ENCODE measurements at regions of chr22 and their contacts with region 1.

Region 1: DNA sequence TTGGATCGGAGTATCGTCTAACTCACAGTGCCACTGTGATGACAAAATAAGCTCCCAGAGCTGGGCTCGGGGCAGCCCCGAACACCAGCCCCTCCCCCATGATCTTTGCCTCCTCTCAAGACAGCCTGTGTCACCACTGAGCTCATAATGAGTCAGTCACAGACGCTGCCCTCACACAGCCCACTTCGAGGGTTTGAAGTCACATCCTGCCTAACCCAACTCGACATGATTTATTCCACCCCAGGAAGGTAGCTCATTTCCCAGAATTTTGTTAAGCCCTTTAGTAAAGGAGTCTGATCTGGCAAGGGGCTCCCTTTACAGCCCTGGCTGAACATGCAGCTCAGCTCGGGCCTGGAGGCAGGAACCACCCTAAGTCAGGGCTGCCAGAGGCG is 22.8 kb downstream of the MYH9 start:
- DNase-seq: peak; percentile 74
- ATAC-seq: peak; percentile 86
- H3K4me3 Mint-ChIP-seq: peak overlapping the region; percentile 74
- H3K27ac Mint-ChIP-seq: peak overlapping the region; percentile 88
- H3K4me1 Mint-ChIP-seq: peaks cover 83% of the 10 kb centered on the region
- H3K27me3 Mint-ChIP-seq: no peaks in the 10 kb centered on the region

Region 2: GRCh38 chr22:36352803-36353507 is 12.1 kb before region 1 on chr22:
- POLR2A ChIA-PET with region 1: interaction called, 11 read pairs
- DNase-seq: peak; percentile 66
- ATAC-seq: peak; percentile 64
- H3K4me3 Mint-ChIP-seq: peak overlapping the region; percentile 64
- H3K27ac Mint-ChIP-seq: peak overlapping the region; percentile 89
- H3K4me1 Mint-ChIP-seq: peaks cover 80% of the 10 kb centered on the region
- H3K27me3 Mint-ChIP-seq: no peaks in the 10 kb centered on the region

Region 3: GRCh38 chr22:36379593-36380361 is 14.8 kb after region 1 on chr22:
- POLR2A ChIA-PET with region 1: interaction called, 132 read pairs
- DNase-seq: peak; percentile 59
- ATAC-seq: peak; percentile 62
- H3K4me3 Mint-ChIP-seq: peak overlapping the region; percentile 78
- H3K27ac Mint-ChIP-seq: peak overlapping the region; percentile 97
- H3K4me1 Mint-ChIP-seq: peaks cover 83% of the 10 kb centered on the region
- H3K27me3 Mint-ChIP-seq: no peaks in the 10 kb centered on the region

Region 4: DNA sequence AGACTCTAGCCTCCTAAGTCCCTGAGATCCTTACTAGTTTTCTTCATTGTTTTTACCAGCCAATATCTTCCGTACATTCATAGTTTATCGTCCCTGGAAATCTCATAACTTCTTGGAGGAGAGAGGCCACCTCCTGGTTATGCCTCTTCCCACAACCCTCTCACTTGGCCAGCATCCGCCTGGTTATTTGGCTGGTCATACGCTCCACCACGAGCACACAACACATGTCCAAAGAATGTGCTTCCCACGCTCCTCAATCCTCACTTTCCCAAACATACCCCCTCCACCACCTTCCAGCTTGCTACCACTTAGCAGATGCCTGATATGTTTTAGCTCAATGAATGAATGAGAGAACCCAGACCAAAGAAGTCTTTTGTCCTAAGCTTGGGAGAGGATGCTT is 247.4 kb after region 1 on chr22:
- POLR2A ChIA-PET with region 1: no interaction called
- DNase-seq: no peak
- ATAC-seq: no peak
- H3K4me3 Mint-ChIP-seq: no peak overlapping the region
- H3K27ac Mint-ChIP-seq: no peak overlapping the region
- H3K4me1 Mint-ChIP-seq: no peaks in the 10 kb centered on the region
- H3K27me3 Mint-ChIP-seq: peaks cover 20% of the 10 kb centered on the region